Vagina (tissue), 2 donors: ENCODE measurements at regions of chr15 and their contacts with region 1.

Region 1: GRCh38 chr15:56918046-56918938 is at the start of gene TCF12:
- DNase-seq: peak in 1 of 2 donors; percentile 95
- H3K4me3 ChIP-seq: peak within 1 kb of the TSS; percentile 69 to 80
- H3K27ac ChIP-seq: peak within 1 kb of the TSS; percentile 96
- H3K4me1 ChIP-seq: peaks cover 53% of the 10 kb centered on the region
- H3K27me3 ChIP-seq: no peaks in the 10 kb centered on the region
- CTCF ChIP-seq: peak in 2 of 3 experiments; percentile 28 to 41
- POLR2A ChIP-seq: peak; percentile 6 to 61
- total RNA-seq, gene TCF12: 138 TPM

Region 2: GRCh38 chr15:56732921-56733797 is 185.1 kb before region 1 on chr15 and contains the start of gene ZNF280D:
- intact Hi-C with region 1: loop called (anchors 2 kb)
- DNase-seq: no peak
- H3K4me3 ChIP-seq: peak within 1 kb of the TSS; percentile 61 to 86
- H3K27ac ChIP-seq: peak within 1 kb of the TSS; percentile 95
- H3K4me1 ChIP-seq: peaks cover 70% of the 10 kb centered on the region
- H3K27me3 ChIP-seq: no peaks in the 10 kb centered on the region
- CTCF ChIP-seq: no peak
- POLR2A ChIP-seq: peak in 1 of 2 donors; percentile 38
- total RNA-seq, gene ZNF280D: 57.9 TPM

Region 3: GRCh38 chr15:56786966-56787365 is 131.3 kb before region 1 on chr15:
- intact Hi-C with region 1: no loop called
- DNase-seq: no peak
- H3K4me3 ChIP-seq: no peak overlapping the region
- H3K27ac ChIP-seq: peak overlapping the region; percentile 7
- H3K4me1 ChIP-seq: no peaks in the 10 kb centered on the region
- H3K27me3 ChIP-seq: no peaks in the 10 kb centered on the region
- CTCF ChIP-seq: no peak
- POLR2A ChIP-seq: no peak

Region 4: DNA sequence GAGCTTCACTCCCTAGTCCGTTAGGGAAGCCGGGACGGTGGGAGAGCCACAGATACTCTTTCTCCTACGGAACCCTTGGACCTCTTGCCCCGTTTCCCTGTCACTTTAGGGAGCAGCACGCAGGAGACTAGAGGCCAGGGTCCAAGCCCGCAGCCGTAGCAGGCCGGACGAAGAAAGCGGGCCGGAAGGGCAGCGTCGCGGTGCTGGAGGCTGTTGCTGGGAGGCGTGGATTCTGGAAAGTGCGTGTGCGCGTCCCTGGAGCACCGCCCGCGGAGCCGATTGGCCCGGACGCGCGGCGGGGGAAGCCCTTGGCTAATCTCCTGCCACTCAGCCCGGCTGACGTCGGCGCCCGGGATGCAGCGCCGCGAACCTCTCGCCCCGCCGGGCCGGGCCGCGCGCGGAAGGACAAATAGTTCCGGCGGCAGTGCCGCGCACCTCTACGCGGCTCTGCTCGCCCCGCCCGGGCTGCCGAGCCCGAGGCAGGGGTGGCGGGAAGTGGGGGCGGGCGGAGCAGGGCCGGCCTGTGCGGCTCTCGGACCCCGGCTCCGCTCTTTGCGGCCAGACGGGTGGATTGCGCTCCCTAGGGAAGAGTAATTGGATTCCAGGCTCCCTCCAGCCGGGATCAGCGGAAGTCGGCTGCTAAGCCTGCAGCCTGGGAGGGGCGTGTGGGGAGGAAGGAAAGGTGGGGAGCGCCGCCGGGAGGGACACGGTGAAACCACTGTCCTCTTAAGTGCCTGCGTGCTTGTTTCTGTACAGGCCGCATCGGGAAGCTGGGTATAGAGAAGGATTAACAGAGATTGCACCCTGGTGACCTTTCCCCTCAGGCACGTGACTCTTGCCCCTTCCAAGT is 31.1 kb before region 1 on chr15:
- intact Hi-C with region 1: loop called (anchors 1 kb)
- DNase-seq: peak in 1 of 2 donors; percentile 94
- H3K4me3 ChIP-seq: peak overlapping the region; percentile 61 to 75
- H3K27ac ChIP-seq: peak overlapping the region; percentile 93
- H3K4me1 ChIP-seq: peaks cover 18% of the 10 kb centered on the region
- H3K27me3 ChIP-seq: no peaks in the 10 kb centered on the region
- CTCF ChIP-seq: no peak
- POLR2A ChIP-seq: peak in 1 of 2 donors; percentile 51

Region 5: GRCh38 chr15:56964182-56964581 is 45.9 kb after region 1 on chr15:
- intact Hi-C with region 1: no loop called
- DNase-seq: no peak
- H3K4me3 ChIP-seq: no peak overlapping the region
- H3K27ac ChIP-seq: no peak overlapping the region
- H3K4me1 ChIP-seq: peaks cover 52% of the 10 kb centered on the region
- H3K27me3 ChIP-seq: no peaks in the 10 kb centered on the region
- CTCF ChIP-seq: no peak
- POLR2A ChIP-seq: no peak

Region 6: GRCh38 chr15:57138349-57138788 is 220.1 kb after region 1 on chr15:
- intact Hi-C with region 1: loop called (anchors 10 kb)
- DNase-seq: no peak
- H3K4me3 ChIP-seq: no peak overlapping the region
- H3K27ac ChIP-seq: no peak overlapping the region
- H3K4me1 ChIP-seq: peaks cover 18% of the 10 kb centered on the region
- H3K27me3 ChIP-seq: no peaks in the 10 kb centered on the region
- CTCF ChIP-seq: peak in 2 of 3 experiments; percentile 26 to 57
- POLR2A ChIP-seq: no peak

Region 7: DNA sequence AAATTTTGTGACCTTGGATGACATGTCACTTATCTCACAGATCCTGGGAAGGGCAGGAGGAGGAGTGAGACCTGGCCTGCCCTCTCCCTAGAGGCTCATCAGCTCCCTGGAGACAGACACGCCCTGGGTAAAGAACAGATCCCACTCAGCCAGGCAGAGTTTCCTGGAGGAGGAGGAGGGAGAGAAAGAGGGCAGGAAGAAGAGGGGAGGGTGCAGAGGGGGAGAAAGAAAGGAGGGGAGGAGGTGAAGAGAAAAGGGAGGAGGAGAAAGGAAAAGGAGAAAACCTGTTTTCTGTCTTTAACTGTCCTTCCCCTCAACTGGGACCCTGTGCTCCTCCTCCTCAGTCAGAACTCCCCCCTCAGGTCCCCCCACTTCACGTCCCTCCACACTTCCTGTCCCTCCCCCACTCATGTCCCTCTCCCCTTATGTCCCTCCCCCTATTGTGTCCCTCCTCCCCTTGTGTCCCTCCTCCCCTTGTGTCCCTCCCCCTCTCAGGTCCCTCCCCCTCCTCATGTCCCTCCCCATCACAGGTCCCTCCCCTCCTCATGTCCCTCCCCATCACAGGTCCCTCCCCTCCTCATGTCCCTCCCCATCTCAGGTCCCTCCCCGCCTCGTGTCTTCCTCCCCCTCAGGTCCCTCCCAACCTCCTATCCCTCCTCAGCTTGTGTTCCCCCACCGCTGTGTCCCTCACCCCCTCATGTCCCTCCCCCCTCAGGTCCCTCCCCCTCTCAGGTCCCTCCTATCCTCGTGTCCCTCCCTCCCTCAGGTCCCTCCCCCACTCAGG is 405.7 kb after region 1 on chr15:
- intact Hi-C with region 1: no loop called
- DNase-seq: no peak
- H3K4me3 ChIP-seq: no peak overlapping the region
- H3K27ac ChIP-seq: peak overlapping the region; percentile 68
- H3K4me1 ChIP-seq: peaks cover 8% of the 10 kb centered on the region
- H3K27me3 ChIP-seq: no peaks in the 10 kb centered on the region
- CTCF ChIP-seq: no peak
- POLR2A ChIP-seq: no peak

Region 8: DNA sequence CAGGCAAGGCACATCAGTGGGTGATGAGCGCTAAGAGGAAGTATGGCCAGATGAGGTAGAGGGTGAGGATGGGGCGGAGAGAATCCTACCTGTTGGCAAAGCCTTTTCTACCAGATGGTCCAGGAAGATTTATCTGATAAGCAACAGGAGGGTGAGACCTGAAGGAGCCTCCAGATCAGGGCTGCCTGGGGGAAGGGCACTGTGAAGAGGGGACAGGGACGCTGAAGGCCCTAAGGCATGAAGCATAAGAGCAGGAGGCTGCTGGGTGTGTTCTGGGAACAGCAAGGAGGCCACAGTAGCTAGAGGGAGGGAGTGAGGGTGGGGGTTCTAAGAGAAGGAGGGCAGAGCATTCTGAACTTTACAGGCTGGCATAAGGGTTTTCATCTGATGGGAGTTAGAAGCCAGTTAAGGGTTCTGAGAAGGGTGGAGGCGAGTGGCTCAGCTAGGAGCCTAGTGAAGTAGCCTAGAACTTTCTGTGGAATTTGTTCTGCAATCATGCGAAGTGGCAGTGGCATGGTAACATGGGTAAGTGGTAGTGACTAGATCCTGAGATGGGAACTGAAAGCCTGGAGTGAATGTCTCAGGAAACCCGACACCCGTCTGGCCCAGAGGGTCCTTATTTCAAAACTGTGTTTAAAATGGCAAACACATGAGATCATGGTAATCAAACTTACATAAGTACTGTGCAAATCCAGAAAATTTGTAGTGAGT is 487.9 kb after region 1 on chr15:
- intact Hi-C with region 1: no loop called
- DNase-seq: no peak
- H3K4me3 ChIP-seq: no peak overlapping the region
- H3K27ac ChIP-seq: peak overlapping the region; percentile 30
- H3K4me1 ChIP-seq: peaks cover 12% of the 10 kb centered on the region
- H3K27me3 ChIP-seq: no peaks in the 10 kb centered on the region
- CTCF ChIP-seq: no peak
- POLR2A ChIP-seq: no peak